Activated T-helper 2 cell treated with anti-CD3 and anti-CD28 coated beads, Interferon-gamma antibody, Interleukin-2, Interleukin-4, amounts not matched to agents 10 μg/mL and 5 μg/mL and 100 μg/mL, durations not matched to agents 14 hours and 24 hours and 36 hours (primary cell): ENCODE measurements at regions of chr17 and their contacts with region 1.

Region 1: DNA sequence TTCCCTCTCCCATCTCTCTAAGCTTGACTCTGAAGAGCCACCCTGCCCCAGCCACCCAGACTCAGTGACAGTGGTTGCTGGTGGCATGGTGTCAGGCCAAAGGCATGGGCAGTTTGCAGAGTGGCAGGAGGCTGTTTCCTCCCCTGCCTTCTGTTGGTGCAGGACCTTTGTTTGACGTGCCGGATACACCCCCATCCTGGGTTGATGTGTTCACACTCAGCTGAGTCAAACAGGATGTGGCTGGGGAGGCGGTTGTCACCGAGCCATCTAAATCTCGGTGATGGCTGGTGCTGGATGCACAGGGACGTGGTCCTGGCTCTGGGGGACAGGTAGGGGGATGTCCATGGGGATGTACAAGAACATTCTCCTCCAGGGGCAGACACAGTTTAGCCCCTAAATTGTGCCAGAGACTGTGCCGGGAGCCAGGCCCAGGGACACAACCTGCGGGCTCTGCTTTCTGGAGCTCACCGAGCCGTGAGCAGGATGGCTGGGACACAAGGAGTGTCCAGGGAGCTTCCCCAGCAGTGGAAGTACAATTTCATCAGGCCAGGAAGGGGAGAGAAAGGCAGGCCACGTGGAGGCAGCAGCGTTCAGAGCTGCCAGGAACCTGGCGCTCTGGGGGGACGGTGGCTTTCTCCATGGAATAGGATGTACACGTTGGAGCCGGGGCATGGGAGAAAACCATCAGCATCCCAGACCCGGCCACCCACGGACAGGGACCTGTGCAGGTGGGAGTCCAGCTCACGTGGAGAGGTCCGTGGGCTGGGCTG is 264.2 kb downstream of the SEC14L1 start:
- DNase-seq: peak; percentile 77
- H3K4me3 Mint-ChIP-seq: peak overlapping the region; percentile 93
- H3K27ac Mint-ChIP-seq: peak overlapping the region; percentile 84
- H3K4me1 Mint-ChIP-seq: peaks cover 72% of the 10 kb centered on the region
- H3K27me3 Mint-ChIP-seq: no peaks in the 10 kb centered on the region

Region 2: DNA sequence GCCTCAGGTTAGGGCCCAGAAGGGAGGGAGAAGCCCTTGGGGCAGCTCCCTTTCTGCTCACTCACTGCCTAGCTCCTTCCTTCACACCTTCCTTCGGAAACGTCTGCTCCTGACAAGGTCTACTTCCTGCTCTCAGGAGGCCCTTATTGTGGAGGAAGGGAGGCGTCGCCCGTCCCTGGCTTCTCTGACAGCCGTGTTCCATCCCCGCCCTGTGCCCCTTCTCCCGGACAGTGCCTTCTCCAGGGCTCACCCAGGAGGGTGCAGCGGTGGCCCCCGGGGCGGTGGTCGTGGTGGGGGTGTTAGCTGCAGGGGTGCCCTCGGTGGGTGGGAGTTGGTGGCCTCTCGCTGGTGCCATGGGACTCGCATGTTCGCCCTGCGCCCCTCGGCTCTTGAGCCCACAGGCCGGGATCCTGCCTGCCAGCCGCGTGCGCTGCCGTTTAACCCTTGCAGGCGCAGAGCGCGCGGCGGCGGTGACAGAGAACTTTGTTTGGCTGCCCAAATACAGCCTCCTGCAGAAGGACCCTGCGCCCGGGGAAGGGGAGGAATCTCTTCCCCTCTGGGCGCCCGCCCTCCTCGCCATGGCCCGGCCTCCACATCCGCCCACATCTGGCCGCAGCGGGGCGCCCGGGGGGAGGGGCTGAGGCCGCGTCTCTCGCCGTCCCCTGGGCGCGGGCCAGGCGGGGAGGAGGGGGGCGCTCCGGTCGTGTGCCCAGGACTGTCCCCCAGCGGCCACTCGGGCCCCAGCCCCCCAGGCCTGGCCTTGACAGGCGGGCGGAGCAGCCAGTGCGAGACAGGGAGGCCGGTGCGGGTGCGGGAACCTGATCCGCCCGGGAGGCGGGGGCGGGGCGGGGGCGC is 32.3 kb before region 1 on chr17:
- intact Hi-C with region 1: loop called (anchors 5 kb)
- DNase-seq: peak; percentile 77
- H3K4me3 Mint-ChIP-seq: peak overlapping the region; percentile 75
- H3K27ac Mint-ChIP-seq: peak overlapping the region; percentile 75
- H3K4me1 Mint-ChIP-seq: peaks cover 44% of the 10 kb centered on the region
- H3K27me3 Mint-ChIP-seq: no peaks in the 10 kb centered on the region

Region 3: GRCh38 chr17:77391668-77392375 is 13.2 kb before region 1 on chr17:
- intact Hi-C with region 1: loop called (anchors 1 kb)
- DNase-seq: peak; percentile 56
- H3K4me3 Mint-ChIP-seq: peak overlapping the region; percentile 67
- H3K27ac Mint-ChIP-seq: peak overlapping the region; percentile 84
- H3K4me1 Mint-ChIP-seq: peaks cover 63% of the 10 kb centered on the region
- H3K27me3 Mint-ChIP-seq: no peaks in the 10 kb centered on the region

Region 4: GRCh38 chr17:77434136-77435114 is 29.4 kb after region 1 on chr17:
- intact Hi-C with region 1: no loop called
- DNase-seq: no peak
- H3K4me3 Mint-ChIP-seq: peak overlapping the region; percentile 56
- H3K27ac Mint-ChIP-seq: peak overlapping the region; percentile 62
- H3K4me1 Mint-ChIP-seq: peaks cover 76% of the 10 kb centered on the region
- H3K27me3 Mint-ChIP-seq: no peaks in the 10 kb centered on the region

Region 5: DNA sequence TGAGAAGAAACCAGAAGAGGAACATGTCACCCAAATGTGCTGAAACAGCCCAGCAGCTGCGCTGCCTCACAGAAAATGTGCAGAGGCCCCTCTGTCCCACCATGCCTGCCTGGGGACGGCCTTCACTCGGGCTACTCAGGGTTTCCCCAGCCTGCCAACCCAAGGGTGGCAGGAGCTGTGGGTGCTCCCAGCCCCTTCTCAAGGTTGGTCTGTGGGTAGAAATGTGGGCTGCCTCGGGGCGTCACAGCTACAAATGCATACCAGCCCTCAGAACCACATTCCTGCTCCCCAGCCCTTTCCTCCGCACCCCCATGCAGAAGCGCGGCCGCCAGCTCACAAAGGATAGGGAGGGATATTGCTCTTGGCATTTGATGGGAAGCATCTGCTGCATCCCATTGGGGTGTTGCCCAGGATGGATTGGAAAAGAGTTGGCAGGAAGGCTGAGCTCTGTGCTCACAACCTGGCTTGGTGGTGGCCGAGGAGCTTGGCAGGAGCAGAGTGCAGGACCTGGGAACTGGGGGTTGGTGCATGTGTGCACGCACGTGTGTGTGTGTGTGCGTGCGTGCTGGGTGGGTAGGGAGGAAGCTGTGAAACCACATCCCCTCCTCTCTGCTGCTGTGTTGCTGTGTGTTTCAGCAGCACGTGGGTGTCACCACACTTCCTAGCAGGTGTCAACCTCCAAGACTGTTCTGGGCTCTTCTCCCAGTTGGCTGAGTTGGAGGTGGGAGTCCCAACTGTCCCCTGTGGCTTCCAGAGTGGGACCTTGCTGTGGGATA is 40.2 kb after region 1 on chr17:
- intact Hi-C with region 1: loop called (anchors 2 kb)
- DNase-seq: peak; percentile 85
- H3K4me3 Mint-ChIP-seq: peak overlapping the region; percentile 77
- H3K27ac Mint-ChIP-seq: peak overlapping the region; percentile 99
- H3K4me1 Mint-ChIP-seq: peaks cover 84% of the 10 kb centered on the region
- H3K27me3 Mint-ChIP-seq: no peaks in the 10 kb centered on the region

Region 6: DNA sequence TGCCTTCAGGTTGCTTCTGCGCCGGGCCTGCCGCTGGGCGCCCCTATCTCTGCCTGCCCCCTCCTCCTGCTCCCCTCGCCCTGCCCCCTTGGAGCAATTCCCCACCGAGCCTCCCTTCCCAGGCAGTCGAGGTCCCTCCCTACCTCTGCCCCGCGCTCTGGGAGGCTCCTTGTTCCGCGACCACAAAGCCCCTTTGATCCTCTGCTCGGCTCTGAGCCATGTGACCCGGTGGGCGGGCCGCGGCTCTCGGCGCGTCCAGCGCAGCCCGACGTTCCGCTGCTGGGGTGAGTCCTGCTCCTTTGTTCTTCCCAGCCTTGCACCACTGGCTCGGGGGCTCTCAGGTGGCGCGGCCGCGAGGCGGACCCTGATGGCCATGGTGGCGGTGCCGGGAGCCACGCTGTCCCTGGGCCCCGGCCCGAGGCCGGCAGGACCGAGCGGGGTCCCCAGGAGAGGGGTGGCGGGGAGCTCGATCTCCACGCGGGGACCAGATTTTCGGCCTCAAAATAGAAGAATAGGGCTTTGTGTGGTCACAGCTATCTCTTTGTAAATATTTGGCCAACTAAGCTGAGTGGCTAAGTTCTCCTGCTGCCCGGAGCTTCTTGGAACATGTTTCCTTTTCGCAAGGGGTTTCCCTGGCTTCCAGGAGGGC is 46.4 kb after region 1 on chr17:
- intact Hi-C with region 1: loop called (anchors 2 kb)
- DNase-seq: peak; percentile 68
- H3K4me3 Mint-ChIP-seq: peak overlapping the region; percentile 99
- H3K27ac Mint-ChIP-seq: peak overlapping the region; percentile 93
- H3K4me1 Mint-ChIP-seq: peaks cover 52% of the 10 kb centered on the region
- H3K27me3 Mint-ChIP-seq: no peaks in the 10 kb centered on the region

Region 7: DNA sequence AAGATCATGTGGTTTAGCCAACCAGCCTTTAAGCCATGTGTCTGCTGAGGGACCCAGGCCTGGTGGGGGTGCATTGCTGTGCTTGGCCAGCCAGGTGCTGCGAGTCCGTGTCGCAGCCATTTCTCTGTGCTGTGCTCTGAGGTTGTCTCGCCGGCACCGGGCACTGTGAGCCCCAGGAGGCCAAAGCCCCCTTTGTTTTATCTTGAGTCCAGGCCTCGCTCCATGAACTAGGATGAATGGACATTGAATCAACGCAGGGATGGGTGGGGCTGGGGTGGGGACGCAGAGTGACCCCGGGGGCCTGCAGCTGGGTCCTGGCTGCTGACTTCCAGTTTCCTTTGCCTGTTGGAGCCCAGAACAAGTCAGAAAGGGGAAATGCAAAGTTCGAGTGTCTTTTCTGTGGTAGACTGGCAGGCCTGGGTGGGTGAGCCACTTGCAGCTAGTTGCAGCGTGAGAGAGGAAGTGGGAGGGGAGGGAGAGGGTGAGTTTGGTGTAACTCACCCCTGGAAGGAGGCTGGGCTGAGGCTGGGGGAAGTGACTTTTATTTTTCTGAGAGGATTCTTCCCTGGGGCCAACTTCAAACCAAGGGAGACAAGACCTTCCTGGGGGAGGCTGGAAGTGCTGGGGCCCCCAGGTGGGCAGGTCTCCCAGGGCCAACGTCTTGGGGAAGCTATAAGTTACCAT is 60.5 kb after region 1 on chr17:
- intact Hi-C with region 1: loop called (anchors 2 kb)
- DNase-seq: peak; percentile 77
- H3K4me3 Mint-ChIP-seq: peak overlapping the region; percentile 49
- H3K27ac Mint-ChIP-seq: peak overlapping the region; percentile 80
- H3K4me1 Mint-ChIP-seq: peaks cover 66% of the 10 kb centered on the region
- H3K27me3 Mint-ChIP-seq: no peaks in the 10 kb centered on the region

Region 8: GRCh38 chr17:77476931-77477877 is 72.2 kb after region 1 on chr17:
- intact Hi-C with region 1: no loop called
- DNase-seq: no peak
- H3K4me3 Mint-ChIP-seq: no peak overlapping the region
- H3K27ac Mint-ChIP-seq: peak overlapping the region; percentile 64
- H3K4me1 Mint-ChIP-seq: peaks cover 60% of the 10 kb centered on the region
- H3K27me3 Mint-ChIP-seq: no peaks in the 10 kb centered on the region

Region 9: DNA sequence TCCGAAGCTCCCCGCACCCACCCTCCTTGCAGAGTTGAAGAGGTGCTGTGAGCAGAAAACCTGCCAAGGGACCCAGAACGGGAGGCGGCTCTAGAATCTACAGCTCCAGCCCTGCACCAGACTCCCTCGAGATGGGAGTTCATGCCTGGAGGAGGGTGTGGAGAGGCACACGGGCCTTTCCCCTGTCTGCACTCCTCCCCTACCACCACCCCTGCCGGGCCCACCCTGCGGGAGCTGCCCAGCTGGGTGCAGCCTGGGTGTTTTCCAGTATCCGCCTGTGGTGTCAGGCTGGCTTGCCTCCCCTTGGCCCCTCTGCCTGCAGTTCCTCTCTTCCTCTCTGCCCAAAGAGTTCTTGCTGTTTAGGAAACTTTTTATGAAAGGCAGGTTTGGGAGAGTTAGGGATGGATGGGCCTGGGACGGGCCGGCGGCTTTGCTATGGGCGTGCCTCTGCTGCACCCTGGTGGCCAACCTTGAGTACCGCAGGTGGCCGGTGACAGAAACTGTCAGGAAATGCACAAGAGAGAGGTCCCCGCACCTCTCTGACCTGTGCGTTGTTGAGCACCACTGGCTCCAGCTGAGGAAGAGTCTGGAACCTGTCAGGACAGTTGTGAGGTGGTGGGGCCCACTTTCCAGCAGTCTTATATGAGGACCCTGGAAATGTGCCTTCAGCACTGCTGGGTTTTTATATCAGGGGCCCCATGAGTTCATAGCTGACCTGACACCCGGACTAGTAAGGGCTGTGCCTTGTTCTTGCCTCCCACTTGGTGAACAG is 89.9 kb after region 1 on chr17:
- intact Hi-C with region 1: loop called (anchors 2 kb)
- DNase-seq: peak; percentile 56
- H3K4me3 Mint-ChIP-seq: no peak overlapping the region
- H3K27ac Mint-ChIP-seq: peak overlapping the region; percentile 31
- H3K4me1 Mint-ChIP-seq: peaks cover 12% of the 10 kb centered on the region
- H3K27me3 Mint-ChIP-seq: no peaks in the 10 kb centered on the region